Activated CD4-positive, alpha-beta T cell treated with anti-CD3 and anti-CD28 coated beads, Interleukin-2, amount 10 ng/mL, durations not matched to agents 7 days and 5 days (primary cell): ENCODE measurements at regions of chr12 and their contacts with region 1.

Region 1: GRCh38 chr12:54379401-54380201 is 4.9 kb downstream of the ZNF385A start:
- DNase-seq: peak; percentile 93
- H3K4me3 Mint-ChIP-seq: peak overlapping the region; percentile 6
- H3K27ac Mint-ChIP-seq: no peak overlapping the region
- H3K4me1 Mint-ChIP-seq: peaks cover 10% of the 10 kb centered on the region
- H3K27me3 Mint-ChIP-seq: no peaks in the 10 kb centered on the region

Region 2: DNA sequence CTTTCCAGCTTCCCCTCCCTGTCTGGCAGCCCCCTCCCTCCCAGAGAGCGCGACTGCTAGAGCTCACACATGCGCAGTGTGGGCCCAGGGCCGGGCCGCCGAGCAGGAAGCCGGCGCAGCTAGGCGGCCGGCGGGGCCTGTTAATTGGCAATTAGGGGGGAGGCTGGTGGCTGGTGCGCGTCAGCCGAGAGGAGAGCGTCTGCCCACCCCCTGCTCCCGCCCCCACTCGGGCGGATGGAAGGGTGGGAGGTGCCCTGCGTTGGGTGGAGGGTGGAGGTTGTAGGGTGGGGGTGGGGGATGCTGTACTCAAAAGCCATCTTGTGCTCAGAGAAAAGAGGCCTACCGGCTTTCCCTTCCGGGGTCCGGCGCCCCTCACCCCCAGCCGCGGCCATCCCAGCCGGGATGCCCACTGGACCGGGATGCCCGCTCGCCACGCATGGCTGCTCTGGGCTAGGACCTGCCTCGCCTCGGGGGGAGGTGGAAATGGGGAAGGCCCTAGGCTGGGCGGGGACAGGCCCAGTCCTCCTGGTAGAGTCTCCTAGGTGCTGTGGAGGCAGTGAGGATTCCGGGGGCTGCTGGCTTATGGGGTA is 361.6 kb before region 1 on chr12:
- CTCF ChIA-PET with region 1: no interaction called
- POLR2A ChIA-PET with region 1: no interaction called
- DNase-seq: peak; percentile 73
- H3K4me3 Mint-ChIP-seq: peak overlapping the region; percentile 74
- H3K27ac Mint-ChIP-seq: peak overlapping the region; percentile 74
- H3K4me1 Mint-ChIP-seq: peaks cover 24% of the 10 kb centered on the region
- H3K27me3 Mint-ChIP-seq: peaks cover 83% of the 10 kb centered on the region

Region 3: GRCh38 chr12:54214553-54215406 is 164.8 kb before region 1 on chr12:
- CTCF ChIA-PET with region 1: interaction called, 12 read pairs
- POLR2A ChIA-PET with region 1: no interaction called
- DNase-seq: peak; percentile 94
- H3K4me3 Mint-ChIP-seq: peak overlapping the region; percentile 78
- H3K27ac Mint-ChIP-seq: no peak overlapping the region
- H3K4me1 Mint-ChIP-seq: peaks cover 44% of the 10 kb centered on the region
- H3K27me3 Mint-ChIP-seq: peaks cover 22% of the 10 kb centered on the region

Region 4: DNA sequence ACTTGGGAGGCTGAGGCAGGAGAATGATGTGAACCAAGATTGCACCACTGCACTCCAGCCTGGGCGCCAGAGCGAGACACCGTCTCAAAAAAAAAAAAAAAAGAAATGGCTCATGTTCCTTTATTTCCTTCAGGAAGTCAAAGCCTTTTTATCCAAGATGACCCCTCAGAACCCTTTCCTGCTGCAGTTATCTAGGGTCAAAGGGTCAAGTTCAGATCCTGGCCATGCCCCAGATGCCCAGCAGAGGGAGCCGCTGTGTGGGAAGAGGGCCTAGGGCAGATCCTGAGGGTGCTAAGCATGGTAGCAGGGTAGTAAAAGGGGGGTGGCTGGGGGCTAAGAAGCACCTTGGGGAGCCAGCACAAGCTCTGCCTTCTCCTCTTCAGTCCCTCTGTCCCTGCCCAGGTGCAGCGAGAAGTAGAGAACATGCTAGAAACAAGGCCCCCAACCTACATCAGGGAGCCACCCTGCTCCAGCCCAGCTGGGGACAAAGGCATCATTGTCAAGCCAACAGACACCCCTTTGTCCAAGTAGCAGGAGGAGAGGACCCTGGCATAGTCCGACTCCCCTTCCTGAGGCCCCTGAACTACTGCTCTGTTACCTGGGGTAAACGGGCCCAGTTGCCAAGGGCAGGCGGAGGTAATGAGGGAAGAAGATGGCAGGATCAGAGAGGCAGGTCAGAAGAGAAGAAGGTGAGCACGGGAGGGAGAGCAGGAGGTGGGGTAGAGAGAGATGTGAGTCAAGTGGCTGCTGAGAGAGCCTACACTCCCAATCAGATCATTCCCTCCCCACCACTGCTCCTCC is 85.2 kb before region 1 on chr12:
- CTCF ChIA-PET with region 1: interaction called, 16 read pairs
- POLR2A ChIA-PET with region 1: no interaction called
- DNase-seq: peak; percentile 72
- H3K4me3 Mint-ChIP-seq: no peak overlapping the region
- H3K27ac Mint-ChIP-seq: no peak overlapping the region
- H3K4me1 Mint-ChIP-seq: peaks cover 9% of the 10 kb centered on the region
- H3K27me3 Mint-ChIP-seq: peaks cover 15% of the 10 kb centered on the region

Region 5: GRCh38 chr12:54359033-54359761 is 20.4 kb before region 1 on chr12:
- CTCF ChIA-PET with region 1: interaction called, 14 read pairs
- POLR2A ChIA-PET with region 1: no interaction called
- DNase-seq: peak; percentile 98
- H3K4me3 Mint-ChIP-seq: no peak overlapping the region
- H3K27ac Mint-ChIP-seq: no peak overlapping the region
- H3K4me1 Mint-ChIP-seq: peaks cover 31% of the 10 kb centered on the region
- H3K27me3 Mint-ChIP-seq: no peaks in the 10 kb centered on the region

Region 6: GRCh38 chr12:54368709-54369583 is 10.7 kb before region 1 on chr12:
- CTCF ChIA-PET with region 1: interaction called, 25 read pairs
- POLR2A ChIA-PET with region 1: no interaction called
- DNase-seq: peak; percentile 93
- H3K4me3 Mint-ChIP-seq: no peak overlapping the region
- H3K27ac Mint-ChIP-seq: peak overlapping the region; percentile 46
- H3K4me1 Mint-ChIP-seq: peaks cover 50% of the 10 kb centered on the region
- H3K27me3 Mint-ChIP-seq: peaks cover 9% of the 10 kb centered on the region

Region 7: GRCh38 chr12:54411391-54412241 is 32.0 kb after region 1 on chr12:
- CTCF ChIA-PET with region 1: interaction called, 12 read pairs
- POLR2A ChIA-PET with region 1: no interaction called
- DNase-seq: peak; percentile 69
- H3K4me3 Mint-ChIP-seq: peak overlapping the region; percentile 78
- H3K27ac Mint-ChIP-seq: peak overlapping the region; percentile 95
- H3K4me1 Mint-ChIP-seq: peaks cover 71% of the 10 kb centered on the region
- H3K27me3 Mint-ChIP-seq: no peaks in the 10 kb centered on the region

Region 8: DNA sequence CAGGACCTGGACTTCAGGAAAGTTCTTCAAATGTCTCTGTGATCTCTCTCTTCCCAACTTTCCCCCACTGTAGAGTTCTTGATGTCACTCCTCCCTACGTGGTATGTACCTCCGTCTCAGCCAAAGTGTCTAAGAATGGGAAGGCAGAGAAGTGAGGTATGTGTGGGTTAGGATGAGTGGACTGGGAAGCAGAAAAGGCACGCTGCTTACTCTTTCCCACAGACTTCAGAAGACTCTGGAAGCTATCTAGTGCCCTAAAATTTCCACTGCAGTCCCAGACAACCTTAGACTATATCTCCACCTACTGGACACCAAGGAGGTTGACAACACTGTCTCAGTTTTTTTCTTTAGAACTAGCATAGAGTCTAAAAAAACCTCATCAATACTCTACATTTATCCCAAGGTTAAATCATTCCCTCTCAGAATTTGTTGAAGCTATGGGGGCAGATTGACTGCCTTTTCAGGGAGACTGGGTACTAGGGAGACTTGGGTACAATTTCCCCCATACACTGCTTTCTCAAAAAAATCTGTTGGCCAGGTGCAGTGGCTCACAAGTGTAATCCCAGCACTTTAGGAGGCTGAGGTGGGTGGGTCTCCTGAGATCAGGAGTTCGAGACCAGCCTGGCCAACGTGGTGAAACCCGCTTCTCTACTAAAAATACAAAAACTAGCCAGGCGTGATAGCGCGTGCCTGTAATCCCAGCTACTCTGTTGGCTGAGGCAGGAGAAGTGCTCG is 60.1 kb after region 1 on chr12:
- CTCF ChIA-PET with region 1: interaction called, 10 read pairs
- POLR2A ChIA-PET with region 1: no interaction called
- DNase-seq: peak; percentile 17
- H3K4me3 Mint-ChIP-seq: no peak overlapping the region
- H3K27ac Mint-ChIP-seq: no peak overlapping the region
- H3K4me1 Mint-ChIP-seq: peaks cover 7% of the 10 kb centered on the region
- H3K27me3 Mint-ChIP-seq: peaks cover 7% of the 10 kb centered on the region

Region 9: DNA sequence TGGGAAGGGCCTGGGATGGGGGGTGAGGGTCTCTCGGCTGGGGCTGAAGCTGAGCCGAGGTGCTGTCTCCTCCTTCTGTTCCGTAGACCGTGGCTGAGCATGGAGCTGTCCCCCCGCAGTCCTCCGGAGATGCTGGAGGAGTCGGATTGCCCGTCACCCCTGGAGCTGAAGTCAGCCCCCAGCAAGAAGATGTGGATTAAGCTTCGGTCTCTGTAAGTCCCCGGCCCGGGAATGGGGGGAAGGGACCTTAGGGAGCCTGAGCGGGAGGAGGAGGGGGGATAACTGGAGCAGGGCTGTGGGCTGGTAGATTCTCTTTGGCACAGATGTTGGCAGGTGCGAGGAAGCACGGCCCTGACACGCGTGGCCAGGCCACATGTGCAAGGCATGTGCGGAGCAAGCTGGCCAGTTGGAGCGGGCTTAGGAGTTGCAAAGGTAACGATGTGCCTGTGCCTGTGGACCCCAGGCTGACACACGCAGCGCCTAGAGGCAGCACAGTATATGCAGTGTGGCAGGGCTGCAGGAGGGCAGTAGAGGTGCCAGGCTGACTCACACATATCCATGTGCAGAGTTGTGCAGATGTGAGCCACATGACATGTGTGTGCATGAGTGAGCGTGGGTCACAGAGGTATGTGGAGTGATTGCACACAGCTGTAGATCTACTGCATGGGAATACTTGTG is 170.3 kb after region 1 on chr12:
- CTCF ChIA-PET with region 1: no interaction called
- POLR2A ChIA-PET with region 1: no interaction called
- DNase-seq: no peak
- H3K4me3 Mint-ChIP-seq: peak overlapping the region; percentile 68
- H3K27ac Mint-ChIP-seq: no peak overlapping the region
- H3K4me1 Mint-ChIP-seq: peaks cover 20% of the 10 kb centered on the region
- H3K27me3 Mint-ChIP-seq: peaks cover 9% of the 10 kb centered on the region

Region 10: GRCh38 chr12:54879150-54879549 is 499.5 kb after region 1 on chr12:
- CTCF ChIA-PET with region 1: no interaction called
- POLR2A ChIA-PET with region 1: no interaction called
- DNase-seq: no peak
- H3K4me3 Mint-ChIP-seq: no peak overlapping the region
- H3K27ac Mint-ChIP-seq: no peak overlapping the region
- H3K4me1 Mint-ChIP-seq: no peaks in the 10 kb centered on the region
- H3K27me3 Mint-ChIP-seq: peaks cover 20% of the 10 kb centered on the region